Upper lobe of right lung (tissue), 1 donor: ENCODE measurements at regions of chr1 and their contacts with region 1.

Region 1: GRCh38 chr1:39326832-39327231 is 122.3 kb downstream of the MACF1 start:
- DNase-seq: no peak
- ATAC-seq: no peak
- H3K4me3 ChIP-seq: no peak overlapping the region
- H3K27ac ChIP-seq: no peak overlapping the region
- H3K4me1 ChIP-seq: no peaks in the 10 kb centered on the region
- H3K27me3 ChIP-seq: no peaks in the 10 kb centered on the region
- CTCF ChIP-seq: no peak

Region 2: DNA sequence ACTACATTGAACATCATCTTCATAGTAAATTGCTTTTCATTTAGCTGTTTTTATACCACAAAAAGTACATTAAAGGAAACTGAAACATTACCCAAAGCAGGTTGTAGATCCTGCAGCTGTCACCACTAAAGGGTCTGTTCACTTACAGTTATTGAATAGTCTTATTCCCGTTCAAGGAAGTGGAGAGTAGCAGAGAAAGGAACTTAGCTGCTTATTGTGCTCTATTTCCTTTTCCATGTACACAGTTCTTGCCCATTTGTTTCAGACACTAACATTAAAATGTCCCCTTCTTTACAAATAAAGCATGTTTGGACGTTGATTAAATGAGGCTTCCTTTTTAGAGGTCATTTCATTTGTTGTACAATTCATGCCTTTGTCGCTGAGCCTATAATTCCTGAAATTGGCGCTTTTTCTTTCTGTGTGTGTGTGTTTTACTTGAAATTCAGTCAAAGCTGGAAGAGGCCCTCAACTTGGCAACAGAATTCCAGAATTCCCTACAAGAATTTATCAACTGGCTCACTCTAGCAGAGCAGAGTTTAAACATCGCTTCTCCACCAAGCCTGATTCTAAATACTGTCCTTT is 120.2 kb after region 1 on chr1:
- intact Hi-C with region 1: loop called (anchors 10 kb)
- DNase-seq: no peak
- ATAC-seq: no peak
- H3K4me3 ChIP-seq: no peak overlapping the region
- H3K27ac ChIP-seq: no peak overlapping the region
- H3K4me1 ChIP-seq: no peaks in the 10 kb centered on the region
- H3K27me3 ChIP-seq: no peaks in the 10 kb centered on the region
- CTCF ChIP-seq: no peak